Activated naive CD8-positive, alpha-beta T cell treated with anti-CD3 and anti-CD28 coated beads, Interleukin-2, amount 10 ng/mL, durations not matched to agents 7 days and 5 days (primary cell): ENCODE measurements at regions of chr1 and their contacts with region 1.

Region 1: GRCh38 chr1:37807555-37808368 is at the starts of genes C1orf122 and YRDC:
- DNase-seq: peak; percentile 93
- ATAC-seq: peak; percentile 87
- H3K4me3 Mint-ChIP-seq: peak within 1 kb of the TSS; percentile 97
- H3K27ac Mint-ChIP-seq: peak within 1 kb of the TSS; percentile 98
- H3K4me1 Mint-ChIP-seq: peaks cover 24% of the 10 kb centered on the region
- H3K27me3 Mint-ChIP-seq: no peaks in the 10 kb centered on the region
- total RNA-seq, gene C1orf122: 15.4 to 18.0 TPM
- total RNA-seq, gene YRDC: 13.3 to 14.1 TPM

Region 2: GRCh38 chr1:37851782-37852210 is 44.0 kb after region 1 on chr1:
- POLR2A ChIA-PET with region 1: interaction called, 19 read pairs
- DNase-seq: no peak
- ATAC-seq: peak; percentile 86
- H3K4me3 Mint-ChIP-seq: no peak overlapping the region
- H3K27ac Mint-ChIP-seq: no peak overlapping the region
- H3K4me1 Mint-ChIP-seq: peaks cover 22% of the 10 kb centered on the region
- H3K27me3 Mint-ChIP-seq: no peaks in the 10 kb centered on the region